B cell (primary cell): ENCODE measurements at regions of chr2 and their contacts with region 1.

Region 1: GRCh38 chr2:131673392-131674173 is 145.9 kb downstream of the CCDC74A start:
- DNase-seq: peak; percentile 71
- ATAC-seq: peak; percentile 67
- H3K4me3 ChIP-seq: peak overlapping the region in 3 of 5 experiments; percentile 30 to 63 (median 48)
- H3K4me3 Mint-ChIP-seq: peak overlapping the region; percentile 73
- H3K27ac ChIP-seq: no peak overlapping the region
- H3K27ac Mint-ChIP-seq: no peak overlapping the region
- H3K4me1 ChIP-seq: peaks cover 20 to 24% of the 10 kb centered on the region in 2 donors
- H3K4me1 Mint-ChIP-seq: peaks cover 20% of the 10 kb centered on the region
- H3K27me3 ChIP-seq: peaks cover 0 to 33% (median 20%) of the 10 kb centered on the region in 4 experiments
- H3K27me3 Mint-ChIP-seq: peaks cover 16% of the 10 kb centered on the region
- CTCF ChIP-seq: peak; percentile 86

Region 2: DNA sequence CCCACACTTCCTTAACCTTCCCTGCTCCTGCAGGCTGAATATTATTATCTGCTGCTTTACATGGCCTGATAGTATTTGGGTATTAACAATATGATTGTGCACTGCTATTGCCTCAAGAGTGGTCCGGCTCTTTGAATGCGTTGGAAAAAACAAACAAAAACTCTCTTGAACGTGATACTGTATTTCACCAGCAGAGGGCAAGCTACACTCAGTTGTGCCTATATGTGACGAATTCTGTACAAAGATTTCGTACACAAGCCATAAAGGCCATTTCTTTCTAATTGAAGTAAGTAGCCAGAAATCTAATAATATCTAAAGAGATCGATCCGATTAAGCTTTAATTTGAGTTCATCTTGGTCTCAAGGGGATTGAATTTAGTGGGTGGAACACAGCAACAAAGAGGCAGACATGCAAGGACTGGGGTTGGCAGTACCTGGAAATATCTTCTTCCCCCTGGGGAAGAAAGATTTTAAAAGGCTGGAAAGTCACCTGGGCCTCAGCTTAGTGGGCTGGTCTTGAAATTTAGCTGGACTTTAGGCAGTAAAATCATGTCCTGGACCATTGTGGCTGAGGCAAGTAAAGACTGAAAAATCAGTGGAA is 260.3 kb before region 1 on chr2:
- CTCF ChIA-PET with region 1: interaction called, 63 read pairs
- POLR2A ChIA-PET with region 1: no interaction called
- intact Hi-C with region 1: loop called (anchors 1 kb)
- DNase-seq: peak; percentile 64
- ATAC-seq: peak; percentile 61
- H3K4me3 ChIP-seq: no peak overlapping the region
- H3K4me3 Mint-ChIP-seq: no peak overlapping the region
- H3K27ac ChIP-seq: no peak overlapping the region
- H3K27ac Mint-ChIP-seq: no peak overlapping the region
- H3K4me1 ChIP-seq: no peaks in the 10 kb centered on the region
- H3K4me1 Mint-ChIP-seq: no peaks in the 10 kb centered on the region
- H3K27me3 ChIP-seq: peaks cover 0 to 13% (median 4%) of the 10 kb centered on the region in 4 experiments
- H3K27me3 Mint-ChIP-seq: peaks cover 38% of the 10 kb centered on the region
- CTCF ChIP-seq: peak; percentile 96

Region 3: GRCh38 chr2:131801210-131801744 is 127.7 kb after region 1 on chr2:
- CTCF ChIA-PET with region 1: interaction called, 19 read pairs
- POLR2A ChIA-PET with region 1: no interaction called
- intact Hi-C with region 1: no loop called
- DNase-seq: peak; percentile 14
- ATAC-seq: no peak
- H3K4me3 ChIP-seq: no peak overlapping the region
- H3K4me3 Mint-ChIP-seq: no peak overlapping the region
- H3K27ac ChIP-seq: no peak overlapping the region
- H3K27ac Mint-ChIP-seq: no peak overlapping the region
- H3K4me1 ChIP-seq: peaks cover 0 to 9% of the 10 kb centered on the region in 2 donors
- H3K4me1 Mint-ChIP-seq: peaks cover 3% of the 10 kb centered on the region
- H3K27me3 ChIP-seq: peaks cover 0 to 4% (median 0%) of the 10 kb centered on the region in 4 experiments
- H3K27me3 Mint-ChIP-seq: peaks cover 8% of the 10 kb centered on the region
- CTCF ChIP-seq: no peak